Posterior vena cava (tissue), 2 donors: ENCODE measurements at regions of chr4 and their contacts with region 1.

Region 1: GRCh38 chr4:52049266-52049665 is 1.8 kb upstream of the SPATA18 start:
- DNase-seq: no peak

Region 2: GRCh38 chr4:53113431-53114225 is 1064.4 kb after region 1 on chr4:
- intact Hi-C with region 1: loop called in 1 of 2 experiments (anchors 5 kb)
- DNase-seq: no peak